Ascending aorta (tissue), 2 donors: ENCODE measurements at regions of chr10 and their contacts with region 1.

Region 1: DNA sequence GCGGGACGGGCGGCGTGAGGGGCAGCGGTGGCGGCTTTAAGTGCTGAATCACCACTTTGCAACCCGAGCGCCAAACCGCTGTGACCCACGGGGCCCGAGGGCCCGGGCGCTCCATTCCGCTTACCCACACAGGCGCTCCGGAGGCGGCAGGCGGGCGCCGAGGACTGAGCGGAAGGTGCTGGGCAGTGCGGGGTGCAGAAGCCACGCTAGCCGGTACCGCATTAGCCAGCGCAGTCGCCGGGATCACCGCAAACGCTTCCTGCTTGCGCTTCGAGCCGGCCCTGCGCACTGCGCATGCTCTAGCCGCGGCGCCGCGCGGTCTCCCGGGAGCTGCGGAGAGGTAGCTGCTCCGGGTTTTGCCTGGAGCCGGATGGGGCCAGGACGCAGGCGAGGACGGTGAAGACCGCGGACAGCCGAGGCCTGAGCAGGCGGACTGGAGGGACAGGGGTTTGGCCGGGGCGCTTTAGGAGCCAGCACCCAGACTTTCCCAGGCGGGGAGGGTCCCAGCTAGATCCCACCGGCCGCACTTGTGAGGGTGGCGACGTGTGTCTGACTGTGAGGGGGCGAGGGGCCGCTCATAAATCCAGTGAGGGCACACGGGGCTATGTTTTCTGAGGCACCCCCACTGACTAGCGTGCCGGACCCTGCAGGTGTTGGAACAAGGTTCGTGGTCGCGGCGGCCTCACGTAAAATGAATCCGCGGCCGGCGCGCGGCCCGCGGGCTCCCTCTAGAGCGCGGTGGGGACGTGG is at the start of gene IDE:
- DNase-seq: peak; percentile 19 to 91
- H3K4me3 ChIP-seq: peak within 1 kb of the TSS; percentile 75 to 93
- H3K27ac ChIP-seq: peak within 1 kb of the TSS; percentile 85 to 95
- H3K4me1 ChIP-seq: peaks cover 4 to 24% of the 10 kb centered on the region in 2 donors
- H3K27me3 ChIP-seq: no peaks in the 10 kb centered on the region
- CTCF ChIP-seq: peak; percentile 76 to 92 (median 91)
- total RNA-seq, gene IDE: 22.7 TPM

Region 2: GRCh38 chr10:92517034-92517655 is 56.8 kb before region 1 on chr10:
- intact Hi-C with region 1: loop called (anchors 1 kb)
- DNase-seq: peak in 1 of 2 donors; percentile 77
- H3K4me3 ChIP-seq: no peak overlapping the region
- H3K27ac ChIP-seq: no peak overlapping the region
- H3K4me1 ChIP-seq: no peaks in the 10 kb centered on the region
- H3K27me3 ChIP-seq: no peaks in the 10 kb centered on the region
- CTCF ChIP-seq: peak; percentile 54 to 72 (median 55)

Region 3: GRCh38 chr10:92592761-92593618 is 19.0 kb after region 1 on chr10 and contains the start of gene KIF11:
- intact Hi-C with region 1: loop called (anchors 1 kb)
- DNase-seq: peak; percentile 94 to 99
- H3K4me3 ChIP-seq: peak within 1 kb of the TSS; percentile 58 to 70
- H3K27ac ChIP-seq: peak within 1 kb of the TSS; percentile 92 to 96
- H3K4me1 ChIP-seq: peaks cover 4 to 5% of the 10 kb centered on the region in 2 donors
- H3K27me3 ChIP-seq: no peaks in the 10 kb centered on the region
- CTCF ChIP-seq: no peak
- total RNA-seq, gene KIF11: not detected

Region 4: GRCh38 chr10:92615515-92615914 is 41.5 kb after region 1 on chr10:
- intact Hi-C with region 1: no loop called
- DNase-seq: no peak
- H3K4me3 ChIP-seq: no peak overlapping the region
- H3K27ac ChIP-seq: no peak overlapping the region
- H3K4me1 ChIP-seq: no peaks in the 10 kb centered on the region
- H3K27me3 ChIP-seq: no peaks in the 10 kb centered on the region
- CTCF ChIP-seq: no peak

Region 5: GRCh38 chr10:93515071-93516005 is 941.4 kb after region 1 on chr10:
- intact Hi-C with region 1: loop called (anchors 10 kb)
- DNase-seq: no peak
- H3K4me3 ChIP-seq: peak overlapping the region in 1 of 2 donors; percentile 5
- H3K27ac ChIP-seq: peak overlapping the region; percentile 85 to 88
- H3K4me1 ChIP-seq: peaks cover 7 to 21% of the 10 kb centered on the region in 2 donors
- H3K27me3 ChIP-seq: no peaks in the 10 kb centered on the region
- CTCF ChIP-seq: no peak